Activated CD4-positive, alpha-beta T cell treated with anti-CD3 and anti-CD28 coated beads for 36 hours (primary cell): ENCODE measurements at regions of chr1 and their contacts with region 1.

Region 1: DNA sequence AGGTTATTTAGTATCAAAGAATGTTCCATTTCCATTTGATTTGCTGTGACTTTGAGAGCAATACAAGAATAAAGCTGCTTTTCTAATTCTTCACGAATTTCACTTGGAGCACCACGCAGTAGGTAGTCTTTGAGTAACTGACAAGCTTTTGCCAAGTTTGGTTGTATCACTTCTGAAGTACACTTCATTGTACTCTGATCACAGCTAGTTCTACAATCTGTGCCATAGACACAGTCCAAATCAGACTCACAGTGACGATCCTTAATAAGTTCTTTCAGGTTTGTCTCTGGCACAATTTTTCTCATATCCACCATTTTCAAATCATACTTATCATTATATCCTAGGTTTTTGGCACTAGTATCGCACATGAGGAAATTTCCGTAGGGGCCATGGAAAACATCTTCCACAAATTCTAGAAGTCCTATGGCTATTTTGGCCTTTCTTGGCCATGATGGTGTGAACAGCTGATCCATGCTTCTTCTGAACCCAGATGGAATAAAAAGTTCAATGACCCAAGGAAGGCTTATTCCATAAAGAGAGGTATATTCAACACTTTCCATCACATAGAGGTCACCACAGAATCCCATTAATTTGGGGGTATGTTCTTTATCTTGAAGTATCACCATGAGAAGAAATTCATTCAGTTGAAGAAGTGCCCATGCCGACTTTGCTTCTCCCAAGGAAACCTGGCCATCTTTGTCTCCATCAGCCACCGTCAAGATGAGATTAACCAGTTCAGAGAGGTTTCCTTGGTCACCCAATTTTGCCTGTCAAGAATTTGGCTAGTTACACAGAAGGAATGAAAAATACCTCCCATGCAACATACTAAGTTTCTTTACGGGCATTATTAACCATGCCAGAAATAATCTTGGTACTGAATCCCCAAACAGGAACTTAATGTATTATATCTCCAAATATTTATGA is 11.9 kb downstream of the RPL5 start:
- DNase-seq: no peak
- ATAC-seq: no peak
- H3K4me3 Mint-ChIP-seq: no peak overlapping the region
- H3K27ac Mint-ChIP-seq: peak overlapping the region; percentile 37
- H3K4me1 Mint-ChIP-seq: peaks cover 16% of the 10 kb centered on the region
- H3K27me3 Mint-ChIP-seq: no peaks in the 10 kb centered on the region

Region 2: DNA sequence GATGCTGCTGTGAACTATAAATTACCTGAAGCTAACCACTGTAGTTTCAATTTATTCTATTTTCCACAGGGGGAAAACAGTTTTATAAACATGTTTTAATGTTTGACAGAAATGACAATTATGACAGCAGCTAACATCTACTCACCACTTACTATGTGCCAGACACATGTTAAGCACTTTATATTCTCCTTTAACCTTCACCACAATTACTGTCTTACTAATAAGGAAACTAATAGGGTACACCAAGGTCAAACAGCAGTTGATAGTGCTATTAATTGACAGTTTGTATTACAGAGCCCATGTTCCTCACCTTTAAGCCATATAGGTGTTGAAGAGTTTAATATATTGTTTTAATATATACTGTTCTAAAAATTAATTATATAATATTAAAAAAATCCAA is 205.2 kb before region 1 on chr1:
- CTCF ChIA-PET with region 1: no interaction called
- POLR2A ChIA-PET with region 1: interaction called, 10 read pairs
- intact Hi-C with region 1: no loop called
- DNase-seq: no peak
- ATAC-seq: no peak
- H3K4me3 Mint-ChIP-seq: no peak overlapping the region
- H3K27ac Mint-ChIP-seq: no peak overlapping the region
- H3K4me1 Mint-ChIP-seq: no peaks in the 10 kb centered on the region
- H3K27me3 Mint-ChIP-seq: no peaks in the 10 kb centered on the region

Region 3: GRCh38 chr1:92754000-92754718 is 89.5 kb before region 1 on chr1:
- CTCF ChIA-PET with region 1: no interaction called
- POLR2A ChIA-PET with region 1: no interaction called
- intact Hi-C with region 1: no loop called
- DNase-seq: no peak
- ATAC-seq: no peak
- H3K4me3 Mint-ChIP-seq: no peak overlapping the region
- H3K27ac Mint-ChIP-seq: no peak overlapping the region
- H3K4me1 Mint-ChIP-seq: no peaks in the 10 kb centered on the region
- H3K27me3 Mint-ChIP-seq: no peaks in the 10 kb centered on the region

Region 4: DNA sequence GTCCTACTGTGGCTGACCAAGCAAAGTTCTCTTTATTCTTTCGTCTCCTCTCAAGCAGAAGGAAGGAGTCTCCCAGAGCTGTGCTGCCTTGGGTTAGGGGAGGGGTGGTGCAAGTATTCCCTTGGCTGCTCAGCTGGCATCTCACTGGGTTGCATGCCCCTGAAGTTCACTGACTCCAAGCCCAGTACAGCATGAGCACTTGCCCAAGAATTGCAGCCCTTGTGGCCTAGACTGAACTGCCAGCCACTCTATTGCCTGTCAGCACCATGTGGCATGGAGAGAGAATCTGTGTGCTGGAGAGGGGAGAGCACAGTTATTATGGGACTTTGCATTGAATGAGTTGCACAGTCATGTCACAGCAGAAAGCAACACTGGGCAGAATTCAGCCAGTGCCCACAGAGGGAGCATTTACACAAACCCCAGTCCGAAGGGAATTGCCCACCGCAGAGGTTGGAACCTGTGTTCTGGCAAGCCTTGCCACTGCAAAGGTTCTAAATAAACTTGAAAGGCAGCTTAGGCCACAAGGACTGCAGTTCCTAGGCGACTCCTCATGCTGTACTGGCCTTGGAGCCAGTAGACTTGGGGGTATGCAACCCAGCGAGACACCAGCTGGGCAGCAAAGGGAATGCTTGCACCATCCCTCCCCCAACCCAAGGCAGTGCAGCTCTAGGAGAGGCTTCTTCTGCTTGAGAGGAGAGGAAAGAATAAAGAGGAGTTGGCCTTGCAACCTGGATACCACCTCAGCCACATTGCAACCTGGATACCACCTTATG is 530.8 kb after region 1 on chr1:
- CTCF ChIA-PET with region 1: no interaction called
- POLR2A ChIA-PET with region 1: no interaction called
- intact Hi-C with region 1: no loop called
- DNase-seq: no peak
- ATAC-seq: no peak
- H3K4me3 Mint-ChIP-seq: no peak overlapping the region
- H3K27ac Mint-ChIP-seq: no peak overlapping the region
- H3K4me1 Mint-ChIP-seq: no peaks in the 10 kb centered on the region
- H3K27me3 Mint-ChIP-seq: no peaks in the 10 kb centered on the region